Common myeloid progenitor, CD34-positive (primary cell): ENCODE measurements at regions of chr2 and their contacts with region 1.

Region 1: DNA sequence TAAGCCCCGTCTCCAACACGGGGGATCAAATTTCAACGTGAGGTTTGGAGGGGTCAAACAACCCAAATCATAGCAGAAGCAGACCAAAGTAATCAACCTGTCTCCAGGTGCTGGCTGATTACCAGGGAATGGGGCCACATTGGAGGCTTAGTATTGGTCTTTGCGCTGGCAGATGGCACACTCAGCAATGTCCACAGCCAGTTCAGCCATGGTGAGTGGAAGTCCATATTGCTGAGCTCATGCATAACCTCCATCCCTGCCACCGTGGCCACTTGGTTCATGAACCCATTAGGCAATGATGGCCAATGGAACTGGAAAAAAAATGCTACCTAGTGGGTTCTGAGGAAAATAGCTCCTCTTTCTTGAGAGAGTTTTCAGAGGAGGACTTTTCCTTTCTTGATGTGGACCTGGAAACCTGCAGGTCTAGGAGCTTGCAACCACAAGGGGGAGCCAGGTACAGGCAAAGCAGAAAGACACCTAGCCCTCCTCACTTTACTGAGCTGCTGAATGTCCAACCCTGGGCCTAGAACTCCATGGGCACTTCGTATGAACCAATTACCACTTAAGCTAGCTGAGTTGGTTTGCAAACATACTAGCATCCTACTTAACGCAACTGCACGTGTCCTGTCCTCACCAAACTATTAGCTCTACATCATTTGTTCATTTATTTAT is 128.0 kb upstream of the GYPC start:
- DNase-seq: peak; percentile 71 to 84 (median 78)
- H3K4me3 ChIP-seq: no peak overlapping the region
- H3K27ac ChIP-seq: no peak overlapping the region
- H3K4me1 ChIP-seq: peaks cover 0 to 11% (median 7%) of the 10 kb centered on the region in 4 experiments
- H3K27me3 ChIP-seq: no peaks in the 10 kb centered on the region

Region 2: DNA sequence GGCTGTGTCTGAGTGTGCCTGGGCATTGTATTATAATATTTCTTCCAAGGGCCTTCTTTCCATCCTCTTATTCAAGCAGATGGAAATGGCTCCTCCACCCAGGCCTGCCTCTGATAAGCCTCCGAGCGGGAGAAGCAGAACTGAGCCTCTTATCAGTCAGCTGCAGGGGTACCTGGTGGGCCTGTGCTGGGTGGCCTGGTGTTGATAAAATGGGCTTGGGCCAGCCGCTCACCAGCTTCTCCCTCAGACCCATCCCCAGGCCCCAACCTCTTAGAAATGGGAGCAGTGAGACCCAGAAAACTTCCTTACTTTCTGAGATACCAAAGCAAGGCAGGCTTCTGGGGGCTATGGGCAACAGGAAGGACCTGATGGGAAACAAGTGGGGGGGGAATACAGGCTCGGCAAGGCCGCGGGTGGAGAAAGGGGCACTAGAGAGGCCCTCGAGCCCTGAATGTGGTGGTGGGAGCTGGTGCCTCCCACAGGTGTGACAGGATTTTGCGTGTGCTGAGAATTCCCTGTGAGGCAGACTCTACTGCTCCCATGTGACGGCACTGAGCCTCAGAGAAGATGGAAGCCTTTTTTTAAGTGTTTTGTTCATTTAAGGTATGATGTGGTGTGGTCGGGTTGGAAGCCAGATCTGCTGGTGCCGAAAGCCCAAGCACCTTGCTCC is 146.2 kb after region 1 on chr2:
- CTCF ChIA-PET with region 1: interaction called, 16 read pairs
- POLR2A ChIA-PET with region 1: no interaction called
- DNase-seq: peak; percentile 77 to 89 (median 82)
- H3K4me3 ChIP-seq: peak overlapping the region in 2 of 7 experiments; percentile 7 to 17
- H3K27ac ChIP-seq: peak overlapping the region; percentile 2 to 74
- H3K4me1 ChIP-seq: peaks cover 0 to 35% (median 15%) of the 10 kb centered on the region in 4 experiments
- H3K27me3 ChIP-seq: no peaks in the 10 kb centered on the region

Region 3: DNA sequence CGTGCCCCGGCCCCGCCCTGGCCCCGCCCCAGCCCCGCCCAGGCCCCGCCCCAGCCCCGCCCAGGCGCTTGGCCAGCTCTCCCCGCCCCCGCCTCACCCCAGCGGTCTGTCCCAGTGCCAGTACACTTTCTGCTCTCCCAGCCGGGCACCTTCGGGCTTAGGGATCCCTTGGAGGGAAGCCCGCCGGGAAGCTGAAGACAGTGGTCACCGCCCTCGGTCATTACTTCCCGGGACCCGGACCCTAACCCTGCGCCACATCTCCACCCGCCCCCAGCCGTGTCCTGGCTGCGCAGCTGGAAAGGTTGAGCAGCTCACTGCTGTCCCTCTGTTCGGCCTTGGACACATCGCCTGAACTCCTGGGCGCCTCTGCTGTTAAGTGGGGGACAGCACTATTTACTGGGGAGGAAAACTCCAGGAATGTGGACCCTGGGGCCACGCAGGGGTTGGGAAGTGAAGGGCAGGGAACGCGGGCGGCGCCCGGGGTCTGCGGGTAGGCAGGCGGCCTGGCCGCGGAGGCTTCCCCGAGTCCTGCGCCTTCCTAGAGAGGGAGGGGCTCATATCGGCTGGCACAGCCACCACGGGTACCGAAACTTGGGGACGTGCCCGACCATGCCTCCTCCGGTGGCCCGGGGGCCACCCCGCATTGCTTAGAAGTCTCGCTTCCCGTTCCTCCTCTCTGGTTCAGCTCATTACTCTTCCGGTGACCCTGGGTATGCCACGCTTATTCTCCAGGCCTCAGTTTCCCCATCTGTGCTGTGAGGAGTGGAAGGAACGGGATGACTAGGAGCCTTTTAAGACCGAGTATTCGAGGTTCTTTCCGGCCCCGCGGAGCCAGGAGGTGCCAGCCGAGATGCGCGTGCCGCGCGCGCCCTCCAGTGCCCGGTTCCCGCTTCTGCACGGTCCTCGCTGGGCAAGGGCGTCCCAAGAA is 249.0 kb after region 1 on chr2:
- CTCF ChIA-PET with region 1: interaction called, 71 read pairs
- POLR2A ChIA-PET with region 1: no interaction called
- DNase-seq: peak; percentile 64 to 78 (median 75)
- H3K4me3 ChIP-seq: peak overlapping the region; percentile 43 to 85 (median 71)
- H3K27ac ChIP-seq: no peak overlapping the region
- H3K4me1 ChIP-seq: peaks cover 0 to 11% (median 9%) of the 10 kb centered on the region in 4 experiments
- H3K27me3 ChIP-seq: peaks cover 0 to 41% (median 5%) of the 10 kb centered on the region in 5 experiments

Region 4: DNA sequence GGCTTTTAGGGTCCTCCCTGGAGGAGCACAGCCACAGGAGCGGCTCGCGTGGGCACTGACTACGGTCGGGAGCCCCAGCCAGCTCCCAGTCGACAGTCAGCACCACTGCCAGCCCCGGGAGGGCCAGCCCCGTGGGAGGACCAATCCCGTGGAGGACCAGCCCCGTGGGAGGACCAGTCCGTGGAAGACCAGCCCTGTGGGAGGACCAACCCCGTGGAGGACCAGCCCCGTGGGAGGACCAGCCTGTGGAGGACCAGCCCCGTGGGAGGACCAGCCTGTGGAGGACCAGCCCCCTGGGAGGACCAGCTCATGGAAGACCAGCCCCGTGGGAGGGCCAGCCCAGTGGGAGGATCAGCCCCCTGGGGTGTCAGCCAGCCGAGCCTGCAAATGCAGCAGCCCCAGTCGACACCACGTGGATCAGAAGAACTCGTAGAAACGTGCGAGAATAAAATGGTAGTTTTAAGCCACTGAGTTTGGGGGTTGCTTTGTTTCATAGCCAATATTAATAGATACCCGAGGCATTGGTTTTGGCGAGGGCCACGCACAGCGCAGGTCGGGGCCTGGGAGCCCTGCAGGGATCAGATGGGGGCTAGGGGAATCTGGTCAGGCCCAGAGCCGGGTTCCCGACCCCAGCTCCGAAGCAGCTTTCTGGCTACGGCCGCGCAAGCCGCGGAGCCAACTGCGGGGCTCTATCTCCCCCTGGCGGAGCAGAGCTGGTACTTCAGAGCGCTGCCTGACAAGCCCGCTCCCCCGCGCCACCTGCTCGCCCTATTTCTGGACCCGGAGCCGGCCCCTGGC is 443.7 kb after region 1 on chr2:
- CTCF ChIA-PET with region 1: interaction called, 15 read pairs
- POLR2A ChIA-PET with region 1: no interaction called
- DNase-seq: peak; percentile 62 to 84 (median 84)
- H3K4me3 ChIP-seq: peak overlapping the region in 6 of 7 experiments; percentile 36 to 76 (median 55)
- H3K27ac ChIP-seq: no peak overlapping the region
- H3K4me1 ChIP-seq: peaks cover 0 to 13% (median 6%) of the 10 kb centered on the region in 4 experiments
- H3K27me3 ChIP-seq: peaks cover 3 to 21% (median 9%) of the 10 kb centered on the region in 5 experiments